Adrenal gland (tissue), 19 donors: ENCODE measurements at regions of chr17 and their contacts with region 1.

Region 1: GRCh38 chr17:63919311-63919723 is 678 bp upstream of the GH1 start:
- DNase-seq: peak; percentile 53 to 80 (median 67)
- H3K4me3 ChIP-seq: no peak overlapping the region
- H3K27ac ChIP-seq: no peak overlapping the region
- H3K4me1 ChIP-seq: no peaks in the 10 kb centered on the region
- H3K27me3 ChIP-seq: no peaks in the 10 kb centered on the region
- CTCF ChIP-seq: peak; percentile 92 to 98 (median 94)
- POLR2A ChIP-seq: no peak

Region 2: GRCh38 chr17:64025732-64026294 is 106.5 kb after region 1 on chr17:
- intact Hi-C with region 1: loop called (anchors 2 to 10 kb)
- DNase-seq: peak; percentile 76 to 88 (median 87)
- H3K4me3 ChIP-seq: peak overlapping the region in 1 of 4 donors; percentile 35
- H3K27ac ChIP-seq: peak overlapping the region in 3 of 5 donors; percentile 28 to 56 (median 39)
- H3K4me1 ChIP-seq: peaks cover 0 to 10% of the 10 kb centered on the region in 2 donors
- H3K27me3 ChIP-seq: no peaks in the 10 kb centered on the region
- CTCF ChIP-seq: peak; percentile 88 to 97 (median 93)
- POLR2A ChIP-seq: no peak